Activated T-helper 1 cell treated with anti-CD3 and anti-CD28 coated beads, Interleukin-12 subunit alpha, Interleukin-12 subunit beta, Interleukin-2, Interleukin-4 antibody, amounts not matched to agents 30 ng/mL and 10 ng/mL and 1 ng/mL, durations not matched to agents 14 hours and 24 hours and 36 hours (primary cell): ENCODE measurements at regions of chr5 and their contacts with region 1.

Region 1: DNA sequence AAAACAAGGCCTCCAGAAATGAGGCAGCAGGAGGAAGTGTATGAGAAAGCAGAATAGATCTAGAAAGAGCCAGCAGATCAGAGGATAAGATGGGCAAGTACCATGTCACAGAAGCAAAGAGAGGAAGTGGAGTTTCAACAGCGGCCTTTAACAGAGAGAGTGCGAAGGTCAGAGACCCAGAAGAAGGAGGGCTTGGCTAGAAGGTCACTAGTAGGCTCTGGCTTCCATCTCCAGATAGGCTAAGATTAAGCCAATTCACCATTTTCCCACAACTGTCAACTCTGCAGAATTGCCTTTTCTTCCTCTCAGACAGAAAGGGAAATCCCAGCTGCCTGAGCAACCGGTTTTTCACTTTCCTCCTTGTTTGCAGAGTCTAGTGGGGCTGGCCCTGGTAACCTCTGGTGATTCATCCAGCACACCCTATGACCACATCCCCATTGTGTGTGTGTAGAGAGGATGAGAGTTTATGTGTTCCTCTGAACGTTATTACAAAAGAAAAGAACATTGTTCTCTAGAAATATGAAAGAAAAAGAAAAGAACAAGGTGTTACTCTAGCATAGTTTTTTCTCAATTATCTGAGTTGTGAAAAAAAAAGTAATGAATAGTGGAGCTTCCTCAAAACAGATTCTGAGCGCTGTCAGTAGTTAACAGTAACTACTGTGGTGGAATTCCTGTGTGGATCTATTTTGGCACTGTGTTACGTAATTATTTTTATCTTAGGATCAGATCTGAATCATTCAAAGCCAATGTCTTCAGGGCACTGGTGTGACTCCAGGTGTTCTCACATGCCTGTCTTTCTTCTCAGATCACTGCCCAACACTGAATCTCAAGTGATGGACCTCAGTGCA is 220.4 kb downstream of the ARRDC3 start:
- DNase-seq: peak; percentile 70
- H3K4me3 Mint-ChIP-seq: peak overlapping the region; percentile 2
- H3K27ac Mint-ChIP-seq: peak overlapping the region; percentile 54
- H3K4me1 Mint-ChIP-seq: peaks cover 22% of the 10 kb centered on the region
- H3K27me3 Mint-ChIP-seq: peaks cover 14% of the 10 kb centered on the region

Region 2: GRCh38 chr5:90940227-90940995 is 222.3 kb before region 1 on chr5:
- intact Hi-C with region 1: loop called (anchors 5 kb)
- DNase-seq: peak; percentile 42
- H3K4me3 Mint-ChIP-seq: no peak overlapping the region
- H3K27ac Mint-ChIP-seq: peak overlapping the region; percentile 62
- H3K4me1 Mint-ChIP-seq: peaks cover 15% of the 10 kb centered on the region
- H3K27me3 Mint-ChIP-seq: no peaks in the 10 kb centered on the region

Region 3: DNA sequence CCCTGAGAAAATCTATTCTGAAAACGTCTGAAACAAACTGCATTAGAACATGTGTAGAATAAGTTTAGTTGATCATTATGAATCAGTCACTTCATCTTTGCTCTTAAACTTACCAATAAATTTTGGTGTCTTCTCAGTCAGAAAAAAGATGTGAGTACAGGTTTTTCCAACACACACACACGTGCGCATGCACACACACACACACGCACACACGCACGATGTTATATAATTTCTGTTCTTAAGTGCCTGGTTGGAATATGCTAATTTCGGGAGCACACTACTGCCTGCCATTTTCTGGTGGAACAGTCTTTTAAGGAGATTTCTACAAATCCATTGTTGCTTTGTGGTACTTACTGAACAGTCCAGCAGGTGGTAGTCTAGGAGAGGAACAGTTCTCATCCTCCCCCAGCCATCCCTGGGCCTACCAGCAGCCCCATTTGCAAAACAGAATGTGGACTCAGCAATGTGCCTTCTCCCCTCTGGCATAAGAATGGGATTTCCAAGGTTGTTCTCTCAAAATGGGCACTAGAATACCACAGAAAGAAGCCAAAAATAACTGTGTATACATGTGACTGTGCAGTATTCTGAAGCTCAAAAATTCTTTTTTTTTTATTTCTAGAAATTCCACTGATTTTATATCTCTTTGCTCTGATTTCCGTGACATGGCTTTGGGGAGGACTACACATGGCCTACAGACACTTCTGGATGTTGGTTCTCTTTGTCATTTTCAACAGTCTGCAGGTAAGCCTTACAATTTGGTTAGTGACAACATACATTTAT is 61.0 kb before region 1 on chr5:
- intact Hi-C with region 1: loop called (anchors 5 kb)
- DNase-seq: peak; percentile 25
- H3K4me3 Mint-ChIP-seq: no peak overlapping the region
- H3K27ac Mint-ChIP-seq: no peak overlapping the region
- H3K4me1 Mint-ChIP-seq: no peaks in the 10 kb centered on the region
- H3K27me3 Mint-ChIP-seq: peaks cover 12% of the 10 kb centered on the region

Region 4: GRCh38 chr5:91269198-91269597 is 106.4 kb after region 1 on chr5:
- intact Hi-C with region 1: loop called (anchors 1 kb)
- DNase-seq: peak; percentile 41
- H3K4me3 Mint-ChIP-seq: no peak overlapping the region
- H3K27ac Mint-ChIP-seq: peak overlapping the region; percentile 49
- H3K4me1 Mint-ChIP-seq: peaks cover 40% of the 10 kb centered on the region
- H3K27me3 Mint-ChIP-seq: peaks cover 17% of the 10 kb centered on the region

Region 5: GRCh38 chr5:91311697-91312501 is 149.1 kb after region 1 on chr5:
- intact Hi-C with region 1: loop called (anchors 1 kb)
- DNase-seq: peak; percentile 60
- H3K4me3 Mint-ChIP-seq: peak overlapping the region; percentile 77
- H3K27ac Mint-ChIP-seq: peak overlapping the region; percentile 87
- H3K4me1 Mint-ChIP-seq: peaks cover 46% of the 10 kb centered on the region
- H3K27me3 Mint-ChIP-seq: no peaks in the 10 kb centered on the region